Activated CD8-positive, alpha-beta T cell treated with anti-CD3 and anti-CD28 coated beads for 36 hours (primary cell): ENCODE measurements at regions of chr2 and their contacts with region 1.

Region 1: DNA sequence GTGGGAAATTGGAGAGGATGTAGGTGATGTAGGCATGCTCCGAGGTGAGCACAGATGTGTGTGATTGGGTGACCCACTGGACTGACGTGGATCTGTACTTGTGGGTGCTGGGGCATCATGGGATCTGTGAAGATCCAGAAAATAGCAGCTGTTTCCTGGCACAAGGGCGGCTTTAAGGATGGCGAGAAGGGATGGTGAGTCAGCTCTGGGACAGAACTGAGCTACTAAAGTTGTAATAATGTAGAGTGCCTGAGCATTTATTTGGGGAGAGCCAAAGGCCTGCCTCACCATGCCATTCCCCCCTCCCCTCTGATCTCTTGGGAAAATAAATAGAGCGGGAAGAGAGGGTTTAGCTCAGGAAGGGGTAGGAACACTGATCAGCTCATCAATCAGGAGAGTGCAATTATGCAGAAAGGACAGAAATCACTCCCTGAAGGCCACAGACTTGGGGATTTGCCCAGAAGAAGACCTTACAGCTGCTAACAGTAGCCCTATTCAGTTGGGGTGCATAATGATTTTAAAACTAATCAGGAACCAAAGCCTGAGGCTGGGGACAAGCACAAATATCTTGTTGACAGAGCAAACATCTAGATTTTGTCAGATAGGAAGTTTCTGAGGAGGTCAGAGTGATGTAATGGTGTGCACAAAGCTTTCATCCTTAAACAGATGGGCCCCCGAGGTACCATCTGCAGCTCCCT is 30.3 kb downstream of the TANC1 start:
- DNase-seq: no peak
- ATAC-seq: no peak
- H3K4me3 Mint-ChIP-seq: no peak overlapping the region
- H3K27ac Mint-ChIP-seq: no peak overlapping the region
- H3K4me1 Mint-ChIP-seq: peaks cover 2% of the 10 kb centered on the region
- H3K27me3 Mint-ChIP-seq: no peaks in the 10 kb centered on the region
- CTCF ChIP-seq: no peak

Region 2: GRCh38 chr2:158984604-158985135 is 14.0 kb before region 1 on chr2:
- CTCF ChIA-PET with region 1: interaction called, 15 read pairs
- POLR2A ChIA-PET with region 1: interaction called, 4 read pairs
- intact Hi-C with region 1: no loop called
- DNase-seq: no peak
- ATAC-seq: no peak
- H3K4me3 Mint-ChIP-seq: no peak overlapping the region
- H3K27ac Mint-ChIP-seq: no peak overlapping the region
- H3K4me1 Mint-ChIP-seq: no peaks in the 10 kb centered on the region
- H3K27me3 Mint-ChIP-seq: peaks cover 1% of the 10 kb centered on the region
- CTCF ChIP-seq: no peak